Caco-2 (cell line): ENCODE measurements at regions of chr10 and their contacts with region 1.

Region 1: DNA sequence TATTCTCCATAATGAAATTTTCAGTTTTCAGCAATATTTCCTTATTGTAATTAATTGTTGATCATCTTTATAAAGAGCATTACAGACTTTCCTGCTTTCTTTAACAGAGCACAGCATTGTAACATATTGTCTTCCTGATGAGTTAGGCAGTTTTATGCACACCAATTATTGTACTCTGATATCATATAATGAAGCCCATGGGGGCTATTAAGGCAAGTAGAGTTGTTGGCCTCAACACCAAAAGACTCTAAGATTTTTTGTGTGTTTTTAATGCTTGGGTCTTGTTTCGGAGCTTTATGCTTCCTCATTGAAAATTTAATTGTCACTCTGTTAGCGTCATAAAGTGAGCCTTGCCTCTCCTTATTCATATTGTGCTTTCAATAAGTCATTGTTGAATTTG is 49.2 kb upstream of the ARID5B start:
- DNase-seq: no peak
- H3K4me3 ChIP-seq: no peak overlapping the region
- H3K4me3 Mint-ChIP-seq: no peak overlapping the region
- H3K27ac Mint-ChIP-seq: peak overlapping the region; percentile 51
- H3K4me1 ChIP-seq: peaks cover 46% of the 10 kb centered on the region
- H3K4me1 Mint-ChIP-seq: peaks cover 44% of the 10 kb centered on the region
- H3K27me3 ChIP-seq: no peaks in the 10 kb centered on the region
- H3K27me3 Mint-ChIP-seq: no peaks in the 10 kb centered on the region
- CTCF ChIP-seq: no peak

Region 2: DNA sequence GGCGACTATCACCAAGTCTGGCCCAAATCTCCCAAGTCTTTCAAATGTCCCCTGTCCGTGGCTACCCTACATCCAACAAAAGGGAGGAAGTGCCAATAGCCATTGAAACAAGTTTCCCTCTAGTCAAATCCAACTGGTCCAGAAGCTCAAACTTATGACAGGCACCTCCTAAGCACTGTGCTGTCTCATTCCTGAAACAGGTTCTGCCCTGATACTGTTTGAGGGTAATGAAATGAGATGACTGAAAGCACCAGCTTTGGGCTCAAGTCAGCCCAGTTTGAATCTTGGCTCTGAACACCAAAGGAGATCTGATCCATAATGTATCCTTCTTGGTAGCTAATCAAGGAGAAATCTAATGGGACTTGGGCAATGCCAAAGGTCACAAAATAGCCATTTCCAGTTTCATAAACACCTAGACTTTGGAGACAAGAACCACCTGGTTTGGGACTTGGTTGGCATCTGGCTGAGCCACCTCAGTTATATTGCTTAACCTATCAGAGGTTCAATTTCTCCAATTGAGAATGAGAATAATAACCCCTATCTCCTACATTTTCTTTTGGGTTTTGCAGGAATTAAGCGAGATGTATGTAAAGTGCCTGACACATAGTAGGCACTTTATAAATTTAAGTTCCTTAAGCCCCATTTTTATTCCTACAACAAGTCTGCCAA is 14.6 kb after region 1 on chr10:
- CTCF ChIA-PET with region 1: no interaction called
- POLR2A ChIA-PET with region 1: no interaction called
- intact Hi-C with region 1: no loop called
- DNase-seq: no peak
- H3K4me3 ChIP-seq: no peak overlapping the region
- H3K4me3 Mint-ChIP-seq: no peak overlapping the region
- H3K27ac Mint-ChIP-seq: no peak overlapping the region
- H3K4me1 ChIP-seq: peaks cover 9% of the 10 kb centered on the region
- H3K4me1 Mint-ChIP-seq: no peaks in the 10 kb centered on the region
- H3K27me3 ChIP-seq: no peaks in the 10 kb centered on the region
- H3K27me3 Mint-ChIP-seq: no peaks in the 10 kb centered on the region
- CTCF ChIP-seq: no peak

Region 3: GRCh38 chr10:61877887-61878739 is 25.9 kb after region 1 on chr10:
- CTCF ChIA-PET with region 1: no interaction called
- POLR2A ChIA-PET with region 1: no interaction called
- intact Hi-C with region 1: loop called (anchors 1 kb)
- DNase-seq: no peak
- H3K4me3 ChIP-seq: no peak overlapping the region
- H3K4me3 Mint-ChIP-seq: no peak overlapping the region
- H3K27ac Mint-ChIP-seq: no peak overlapping the region
- H3K4me1 ChIP-seq: peaks cover 38% of the 10 kb centered on the region
- H3K4me1 Mint-ChIP-seq: peaks cover 19% of the 10 kb centered on the region
- H3K27me3 ChIP-seq: no peaks in the 10 kb centered on the region
- H3K27me3 Mint-ChIP-seq: no peaks in the 10 kb centered on the region
- CTCF ChIP-seq: no peak

Region 4: DNA sequence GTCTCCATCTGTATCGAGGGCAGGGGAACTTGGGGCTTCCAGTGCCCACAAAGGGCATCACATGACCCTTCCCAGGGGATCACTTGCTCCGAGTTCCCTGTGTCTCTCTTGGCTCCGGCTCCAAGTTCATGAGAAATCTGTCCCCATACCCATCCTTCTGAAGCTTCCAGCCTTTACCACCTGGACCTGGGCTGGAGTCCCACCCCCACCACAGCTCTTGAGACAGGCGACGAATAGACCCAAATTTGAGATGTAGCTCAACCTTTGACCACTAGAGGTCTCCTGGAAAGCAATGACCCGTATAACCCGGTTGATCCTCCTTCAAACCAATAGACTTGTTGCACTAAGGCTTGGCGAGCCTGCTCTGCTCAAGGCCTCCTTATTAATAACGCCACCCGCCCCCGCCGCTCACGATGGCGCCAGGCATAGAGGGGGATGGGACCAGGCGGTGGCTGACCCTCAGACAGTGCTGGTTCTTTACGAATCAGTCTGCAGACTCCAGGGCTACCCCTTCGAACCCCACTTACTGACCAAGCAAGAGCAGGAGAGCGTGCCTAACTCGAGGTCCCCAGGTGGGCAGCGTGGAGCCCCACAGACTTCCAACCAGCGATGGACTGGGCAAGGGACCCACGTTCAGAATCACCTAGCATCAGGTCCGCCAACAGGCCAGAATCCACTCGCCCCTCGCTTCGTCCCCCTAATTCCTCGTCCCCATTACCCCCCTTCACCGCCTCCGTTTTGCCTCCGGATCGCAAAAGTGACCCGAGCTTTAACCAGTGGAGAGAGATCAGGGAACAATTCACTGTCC is 44.8 kb after region 1 on chr10:
- CTCF ChIA-PET with region 1: interaction called, 12 read pairs
- POLR2A ChIA-PET with region 1: interaction called, 3 read pairs
- intact Hi-C with region 1: loop called (anchors 1 kb)
- DNase-seq: peak; percentile 78 to 83
- H3K4me3 ChIP-seq: no peak overlapping the region
- H3K4me3 Mint-ChIP-seq: no peak overlapping the region
- H3K27ac Mint-ChIP-seq: peak overlapping the region; percentile 99
- H3K4me1 ChIP-seq: peaks cover 42% of the 10 kb centered on the region
- H3K4me1 Mint-ChIP-seq: peaks cover 32% of the 10 kb centered on the region
- H3K27me3 ChIP-seq: no peaks in the 10 kb centered on the region
- H3K27me3 Mint-ChIP-seq: no peaks in the 10 kb centered on the region
- CTCF ChIP-seq: peak; percentile 71 to 88

Region 5: GRCh38 chr10:62016623-62017490 is 164.6 kb after region 1 on chr10:
- CTCF ChIA-PET with region 1: no interaction called
- POLR2A ChIA-PET with region 1: no interaction called
- intact Hi-C with region 1: loop called (anchors 5 kb)
- DNase-seq: no peak
- H3K4me3 ChIP-seq: no peak overlapping the region
- H3K4me3 Mint-ChIP-seq: peak overlapping the region; percentile 1
- H3K27ac Mint-ChIP-seq: peak overlapping the region; percentile 26
- H3K4me1 ChIP-seq: peaks cover 69% of the 10 kb centered on the region
- H3K4me1 Mint-ChIP-seq: peaks cover 63% of the 10 kb centered on the region
- H3K27me3 ChIP-seq: no peaks in the 10 kb centered on the region
- H3K27me3 Mint-ChIP-seq: no peaks in the 10 kb centered on the region
- CTCF ChIP-seq: no peak